ENCODE measurements at regions of chr2 and their contacts with region 1.

Region 1: GRCh38 chr2:183026424-183026823 is 11.8 kb downstream of the NCKAP1 start:
- DNase-seq: peak in 1 of 2 experiments; percentile 28
- H3K4me3 ChIP-seq: no peak overlapping the region
- H3K27ac ChIP-seq: 0 out of 2 replicates have a peak overlapping the region, but pooled peaks have one; percentile 5
- H3K4me1 ChIP-seq: peaks cover 8% of the 10 kb centered on the region
- H3K27me3 ChIP-seq: no peaks in the 10 kb centered on the region
- CTCF ChIP-seq: no peak

Region 2: GRCh38 chr2:182982934-182983333 is 43.5 kb before region 1 on chr2:
- CTCF ChIA-PET with region 1: no interaction called
- POLR2A ChIA-PET with region 1: no interaction called
- intact Hi-C with region 1: no loop called
- DNase-seq: no peak
- H3K4me3 ChIP-seq: no peak overlapping the region
- H3K27ac ChIP-seq: no peak overlapping the region
- H3K4me1 ChIP-seq: no peaks in the 10 kb centered on the region
- H3K27me3 ChIP-seq: no peaks in the 10 kb centered on the region
- CTCF ChIP-seq: no peak

Region 3: DNA sequence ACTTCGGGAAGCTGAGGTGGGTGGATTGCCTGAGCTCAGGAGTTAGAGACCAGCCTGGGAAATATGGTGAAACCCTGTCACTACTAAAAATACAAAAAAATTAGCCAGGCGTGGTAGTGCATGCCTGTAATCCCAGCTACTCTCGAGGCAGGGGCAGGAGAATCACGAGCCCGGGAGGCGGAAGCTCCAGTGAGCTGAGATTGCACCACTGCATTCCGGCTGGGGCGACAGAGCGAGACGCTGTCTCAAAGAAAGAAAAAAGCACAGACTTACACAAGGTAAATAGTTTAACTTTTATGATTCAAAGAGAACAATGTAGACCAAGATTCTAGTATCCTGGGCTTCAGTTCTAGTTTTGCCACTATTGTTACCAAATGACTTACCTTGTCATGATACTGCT is 25.6 kb before region 1 on chr2:
- CTCF ChIA-PET with region 1: no interaction called
- POLR2A ChIA-PET with region 1: interaction called, 14 read pairs
- intact Hi-C with region 1: no loop called
- DNase-seq: no peak
- H3K4me3 ChIP-seq: no peak overlapping the region
- H3K27ac ChIP-seq: no peak overlapping the region
- H3K4me1 ChIP-seq: no peaks in the 10 kb centered on the region
- H3K27me3 ChIP-seq: no peaks in the 10 kb centered on the region
- CTCF ChIP-seq: no peak

Region 4: GRCh38 chr2:183093857-183094657 is 67.6 kb after region 1 on chr2:
- CTCF ChIA-PET with region 1: no interaction called
- POLR2A ChIA-PET with region 1: interaction called, 24 read pairs
- intact Hi-C with region 1: no loop called
- DNase-seq: peak in 1 of 2 experiments; percentile 66
- H3K4me3 ChIP-seq: no peak overlapping the region
- H3K27ac ChIP-seq: no peak overlapping the region
- H3K4me1 ChIP-seq: peaks cover 11% of the 10 kb centered on the region
- H3K27me3 ChIP-seq: no peaks in the 10 kb centered on the region
- CTCF ChIP-seq: peak; percentile 62

Region 5: DNA sequence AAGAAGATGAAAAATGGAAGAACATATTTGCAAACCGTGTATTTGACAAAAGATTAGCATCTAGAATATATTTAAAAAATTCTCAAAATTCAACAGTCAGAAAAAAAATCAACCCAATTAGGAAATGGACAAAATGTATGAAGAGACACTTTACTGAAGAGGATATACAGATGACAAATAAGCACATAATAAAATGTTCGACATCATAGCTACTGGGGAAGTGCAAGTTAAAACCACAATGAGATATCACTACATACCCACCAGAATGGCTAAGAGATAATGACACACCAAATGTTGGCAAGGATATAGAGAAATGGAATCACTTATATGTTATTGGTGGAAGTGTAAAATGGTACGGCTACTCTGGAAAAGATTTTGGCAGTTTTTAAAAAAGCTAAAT is 86.2 kb after region 1 on chr2:
- CTCF ChIA-PET with region 1: no interaction called
- POLR2A ChIA-PET with region 1: interaction called, 41 read pairs
- intact Hi-C with region 1: no loop called
- DNase-seq: no peak
- H3K4me3 ChIP-seq: no peak overlapping the region
- H3K27ac ChIP-seq: no peak overlapping the region
- H3K4me1 ChIP-seq: no peaks in the 10 kb centered on the region
- H3K27me3 ChIP-seq: no peaks in the 10 kb centered on the region
- CTCF ChIP-seq: no peak